Panc1 (cell line): ENCODE measurements at regions of chr6 and their contacts with region 1.

Region 1: DNA sequence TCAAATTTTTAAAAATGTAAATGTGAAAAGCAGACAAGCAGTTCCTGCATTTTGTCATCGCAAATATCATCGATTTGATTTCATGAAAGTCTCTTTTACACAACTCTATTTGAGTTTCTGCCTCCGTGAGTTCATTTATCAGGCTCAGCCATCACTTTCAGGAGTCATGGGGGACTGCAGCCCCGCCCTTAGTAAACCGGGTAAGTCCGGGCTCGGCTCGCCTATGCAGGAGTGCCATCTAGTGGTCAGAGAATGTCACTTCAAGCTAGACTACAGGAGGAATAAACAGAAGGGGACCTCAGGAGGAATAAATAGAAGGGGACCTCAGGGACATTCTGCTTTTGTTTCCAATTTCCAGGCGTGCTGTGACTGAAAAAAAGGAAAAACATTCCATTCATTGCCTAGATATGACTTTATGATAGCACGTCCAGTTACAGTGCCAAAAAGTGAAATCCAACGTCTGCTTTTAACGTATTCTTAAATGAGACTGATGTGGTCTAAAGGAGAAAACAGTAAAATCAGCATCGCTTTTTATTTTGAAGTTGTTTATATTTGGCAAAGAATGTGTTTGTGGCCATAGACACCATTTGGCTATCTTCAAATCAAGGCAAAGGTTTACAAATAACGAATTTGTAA is 333.9 kb downstream of the HACE1 start:
- DNase-seq: peak; percentile 46
- ATAC-seq: peak; percentile 94
- H3K4me3 ChIP-seq: peak overlapping the region; percentile 21 to 22
- H3K27ac ChIP-seq: peak overlapping the region; percentile 54; the same call in 1 of the 2 replicates
- H3K4me1 ChIP-seq: peaks cover 12% of the 10 kb centered on the region
- H3K27me3 ChIP-seq: no peaks in the 10 kb centered on the region
- CTCF ChIP-seq: peak; percentile 96

Region 2: DNA sequence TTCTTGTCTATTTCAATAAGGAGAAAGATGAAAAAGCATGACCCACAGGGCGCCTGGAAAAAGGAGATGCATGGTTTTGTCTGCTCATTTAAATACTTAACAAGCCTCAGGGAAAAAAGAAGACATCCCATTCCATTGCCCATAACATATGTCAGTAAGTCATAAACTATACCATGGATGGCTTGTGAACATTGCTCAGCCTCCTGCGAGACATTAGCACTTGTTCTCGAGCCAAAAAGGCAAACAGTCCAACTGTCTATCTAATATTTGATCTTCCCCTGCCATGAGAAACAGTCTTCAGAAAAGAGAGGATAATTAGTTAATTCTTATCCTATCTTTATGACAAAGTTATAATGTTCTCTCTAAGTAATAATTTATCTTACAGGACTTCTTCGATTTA is 193.4 kb before region 1 on chr6:
- CTCF ChIA-PET with region 1: no interaction called
- POLR2A ChIA-PET with region 1: no interaction called
- in situ Hi-C with region 1: no loop called
- intact Hi-C with region 1: loop called (anchors 10 kb)
- DNase-seq: no peak
- ATAC-seq: no peak
- H3K4me3 ChIP-seq: no peak overlapping the region
- H3K27ac ChIP-seq: no peak overlapping the region
- H3K4me1 ChIP-seq: no peaks in the 10 kb centered on the region
- H3K27me3 ChIP-seq: no peaks in the 10 kb centered on the region
- CTCF ChIP-seq: no peak

Region 3: DNA sequence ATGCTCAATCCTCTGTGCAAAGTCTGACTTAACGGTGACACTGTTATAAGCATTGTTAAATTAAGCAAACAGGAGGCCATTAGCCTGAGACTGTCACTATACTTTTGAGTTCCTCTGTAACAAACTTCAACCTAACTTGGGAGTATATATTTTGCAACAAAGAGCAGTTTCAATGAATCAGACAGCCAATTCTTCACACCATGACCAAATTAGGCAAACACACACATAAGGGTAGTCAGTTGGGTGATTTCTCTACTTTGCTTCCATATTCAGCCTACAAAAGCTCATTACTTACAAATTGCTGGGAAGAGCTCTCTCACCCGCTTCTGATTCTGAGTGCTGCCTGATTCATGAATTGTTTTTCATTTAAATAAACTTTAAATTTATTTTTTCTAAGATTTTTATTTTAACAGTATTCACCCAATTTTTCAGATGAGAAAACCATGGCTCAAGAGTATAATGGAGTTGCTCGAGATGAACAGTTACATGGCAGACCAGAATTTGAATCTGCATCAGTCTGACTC is 273.4 kb after region 1 on chr6:
- CTCF ChIA-PET with region 1: no interaction called
- POLR2A ChIA-PET with region 1: no interaction called
- in situ Hi-C with region 1: no loop called
- intact Hi-C with region 1: no loop called
- DNase-seq: no peak
- ATAC-seq: no peak
- H3K4me3 ChIP-seq: no peak overlapping the region
- H3K27ac ChIP-seq: no peak overlapping the region
- H3K4me1 ChIP-seq: no peaks in the 10 kb centered on the region
- H3K27me3 ChIP-seq: no peaks in the 10 kb centered on the region
- CTCF ChIP-seq: no peak